ENCODE measurements at regions of chr9 and their contacts with region 1.

Region 1: DNA sequence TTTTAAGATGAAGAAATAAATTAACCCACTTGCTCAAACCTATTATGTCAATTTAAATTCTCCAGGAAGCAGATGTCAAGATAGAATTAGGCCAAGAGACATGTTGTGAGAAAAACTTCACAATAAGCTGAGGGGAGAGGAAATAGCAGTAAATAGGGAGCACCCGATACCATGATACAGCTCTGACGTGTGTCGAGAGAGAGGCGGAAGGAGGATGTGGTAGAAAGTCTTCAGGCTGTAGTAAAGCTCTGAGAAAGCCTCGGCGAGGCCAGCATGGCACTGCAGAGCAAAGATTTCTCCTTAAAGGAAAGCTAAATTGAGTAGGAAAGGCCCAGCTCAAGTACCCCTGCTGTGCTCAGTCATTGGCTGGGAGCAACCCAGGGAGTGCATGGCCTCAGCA is 6.0 kb upstream of the PUM3 start:
- DNase-seq: peak in 1 of 2 donors; percentile 37
- ATAC-seq: peak; percentile 45 to 70 (median 53)
- H3K4me3 ChIP-seq: no peak overlapping the region
- H3K4me3 Mint-ChIP-seq: no peak overlapping the region
- H3K27ac ChIP-seq: no peak overlapping the region
- H3K27ac Mint-ChIP-seq: peak overlapping the region in 1 of 2 donors; percentile 44
- H3K4me1 ChIP-seq: peaks cover 2% of the 10 kb centered on the region
- H3K4me1 Mint-ChIP-seq: peaks cover 5% of the 10 kb centered on the region in 2 donors
- H3K27me3 ChIP-seq: peaks cover 3% of the 10 kb centered on the region
- H3K27me3 Mint-ChIP-seq: peaks cover 10 to 36% of the 10 kb centered on the region in 2 donors
- CTCF ChIP-seq: no peak

Region 2: DNA sequence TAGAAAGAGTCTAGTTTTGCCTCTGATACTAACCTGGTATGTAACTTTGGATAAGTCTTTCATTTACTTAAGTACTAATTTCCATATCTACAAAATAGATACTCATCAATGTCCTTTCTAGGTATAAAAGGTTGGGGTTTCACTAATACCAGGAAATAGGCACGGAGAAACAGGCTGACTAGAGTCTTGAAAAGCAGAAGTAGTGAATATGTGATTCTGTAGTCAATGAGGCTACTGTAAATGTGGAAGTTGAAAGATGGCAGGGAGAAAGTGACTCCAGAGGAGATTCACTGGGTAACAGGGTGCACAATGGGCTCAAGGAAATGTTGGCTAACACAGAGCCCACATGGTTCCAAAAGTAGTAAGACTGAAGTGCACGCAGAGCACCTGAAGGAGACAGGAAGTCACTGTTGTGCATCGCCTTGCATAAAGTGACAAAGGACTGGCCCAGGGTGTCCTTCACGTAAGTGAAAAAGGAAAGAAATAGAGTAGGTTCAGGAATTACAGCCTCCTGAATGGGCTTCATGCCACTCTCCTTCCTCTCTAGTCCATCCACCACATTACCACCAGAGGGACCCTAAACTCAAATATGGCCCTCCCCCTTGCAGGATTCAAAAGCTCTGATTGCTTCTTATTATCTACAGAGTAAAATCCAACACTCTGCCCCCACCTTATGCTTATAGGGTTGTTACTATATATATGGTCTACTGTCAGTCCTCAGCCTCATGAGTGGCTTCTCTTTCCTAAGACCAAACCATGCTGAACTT is 1122.8 kb before region 1 on chr9:
- intact Hi-C with region 1: no loop called
- DNase-seq: peak in 1 of 2 donors; percentile 43
- ATAC-seq: peak in 1 of 3 donors; percentile 17
- H3K4me3 ChIP-seq: no peak overlapping the region
- H3K4me3 Mint-ChIP-seq: no peak overlapping the region
- H3K27ac ChIP-seq: no peak overlapping the region
- H3K27ac Mint-ChIP-seq: no peak overlapping the region
- H3K4me1 ChIP-seq: no peaks in the 10 kb centered on the region
- H3K4me1 Mint-ChIP-seq: no peaks in the 10 kb centered on the region
- H3K27me3 ChIP-seq: no peaks in the 10 kb centered on the region
- H3K27me3 Mint-ChIP-seq: peaks cover 5 to 6% of the 10 kb centered on the region in 2 donors
- CTCF ChIP-seq: no peak

Region 3: DNA sequence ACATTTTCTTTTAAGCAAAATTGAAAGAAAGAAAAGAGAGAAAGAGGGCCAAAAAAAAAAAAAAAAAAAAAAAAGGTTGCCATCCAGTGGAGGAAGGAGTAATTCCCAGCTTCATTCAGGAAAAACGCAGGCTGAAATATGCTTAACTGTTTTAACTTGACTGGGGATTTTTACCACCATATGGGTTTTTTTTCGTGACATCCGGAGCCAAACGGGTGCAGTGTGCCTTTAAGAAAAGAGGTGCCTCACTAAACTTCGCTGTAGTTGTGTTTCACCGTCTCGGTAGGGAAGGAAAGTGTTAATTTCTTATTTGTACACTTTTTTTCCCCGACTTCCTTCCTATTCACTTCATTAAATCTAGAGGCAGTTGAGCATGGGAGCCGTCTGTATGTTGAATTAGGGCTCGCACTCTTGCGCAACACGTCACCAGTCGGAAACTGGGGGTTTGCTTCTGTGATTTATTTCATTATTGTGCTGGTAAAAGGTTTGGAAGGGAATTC is 691.8 kb before region 1 on chr9:
- intact Hi-C with region 1: loop called (anchors 10 kb)
- DNase-seq: peak; percentile 26 to 72
- ATAC-seq: peak; percentile 75 to 76 (median 75)
- H3K4me3 ChIP-seq: peak overlapping the region; percentile 30
- H3K4me3 Mint-ChIP-seq: peak overlapping the region; percentile 85
- H3K27ac ChIP-seq: no peak overlapping the region
- H3K27ac Mint-ChIP-seq: peak overlapping the region; percentile 80 to 87
- H3K4me1 ChIP-seq: peaks cover 13% of the 10 kb centered on the region
- H3K4me1 Mint-ChIP-seq: peaks cover 72 to 81% of the 10 kb centered on the region in 2 donors
- H3K27me3 ChIP-seq: no peaks in the 10 kb centered on the region
- H3K27me3 Mint-ChIP-seq: no peaks in the 10 kb centered on the region
- CTCF ChIP-seq: no peak

Region 4: DNA sequence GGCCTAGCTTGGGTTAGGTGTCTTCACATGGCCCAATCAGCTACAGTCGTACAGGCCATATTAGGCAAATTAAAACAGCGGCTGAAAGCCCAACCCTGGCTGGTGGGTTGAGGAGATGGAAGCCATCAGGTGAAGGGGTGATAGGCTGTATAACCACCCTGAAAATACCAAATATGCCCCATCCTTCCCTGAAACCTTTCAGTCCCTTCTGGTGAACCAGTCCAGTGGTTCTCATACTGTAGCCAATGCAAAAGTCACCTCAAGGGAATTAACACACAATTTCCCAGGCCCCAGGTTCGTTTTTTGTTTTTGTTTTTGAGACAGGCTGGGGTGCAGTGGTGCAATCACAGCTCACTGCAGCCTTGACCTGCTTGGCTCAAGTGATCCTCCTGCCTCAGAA is 152.4 kb before region 1 on chr9:
- intact Hi-C with region 1: no loop called
- DNase-seq: no peak
- ATAC-seq: no peak
- H3K4me3 ChIP-seq: no peak overlapping the region
- H3K4me3 Mint-ChIP-seq: no peak overlapping the region
- H3K27ac ChIP-seq: no peak overlapping the region
- H3K27ac Mint-ChIP-seq: no peak overlapping the region
- H3K4me1 ChIP-seq: no peaks in the 10 kb centered on the region
- H3K4me1 Mint-ChIP-seq: peaks cover 0 to 5% of the 10 kb centered on the region in 2 donors
- H3K27me3 ChIP-seq: no peaks in the 10 kb centered on the region
- H3K27me3 Mint-ChIP-seq: no peaks in the 10 kb centered on the region
- CTCF ChIP-seq: no peak

Region 5: DNA sequence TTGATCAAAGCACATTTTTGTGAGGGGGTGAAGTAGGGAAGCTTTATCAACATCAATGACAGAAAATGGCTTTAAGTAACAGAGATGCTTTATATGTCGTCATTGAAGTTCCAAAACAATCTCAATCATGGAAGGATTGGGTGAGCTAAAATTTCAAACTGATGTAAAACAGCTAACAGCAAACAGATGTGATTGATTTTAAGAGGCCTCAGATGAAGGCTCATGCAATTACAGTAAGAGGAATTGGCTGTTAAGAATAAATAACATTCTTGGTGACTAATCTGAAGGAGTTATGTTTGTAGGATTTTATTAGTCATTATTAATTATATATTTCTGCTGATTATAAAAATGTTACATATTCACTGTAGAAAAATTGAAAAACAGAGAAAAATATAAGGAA is 57.5 kb after region 1 on chr9:
- intact Hi-C with region 1: no loop called
- DNase-seq: no peak
- ATAC-seq: no peak
- H3K4me3 ChIP-seq: no peak overlapping the region
- H3K4me3 Mint-ChIP-seq: no peak overlapping the region
- H3K27ac ChIP-seq: no peak overlapping the region
- H3K27ac Mint-ChIP-seq: no peak overlapping the region
- H3K4me1 ChIP-seq: no peaks in the 10 kb centered on the region
- H3K4me1 Mint-ChIP-seq: no peaks in the 10 kb centered on the region
- H3K27me3 ChIP-seq: no peaks in the 10 kb centered on the region
- H3K27me3 Mint-ChIP-seq: peaks cover 8 to 9% of the 10 kb centered on the region in 2 donors
- CTCF ChIP-seq: no peak

Measured in natural killer cell (primary cell).